MCF 10A (cell line): ENCODE measurements at regions of chr10 and their contacts with region 1.

Region 1: GRCh38 chr10:125982260-125982948 is 86.0 kb downstream of the FANK1 start:
- DNase-seq: peak; percentile 73
- H3K4me3 Mint-ChIP-seq: no peak overlapping the region
- H3K27ac Mint-ChIP-seq: no peak overlapping the region
- H3K4me1 Mint-ChIP-seq: no peaks in the 10 kb centered on the region
- H3K27me3 Mint-ChIP-seq: no peaks in the 10 kb centered on the region
- CTCF ChIP-seq: peak; percentile 53

Region 2: GRCh38 chr10:125231116-125231812 is 751.1 kb before region 1 on chr10:
- CTCF ChIA-PET with region 1: no interaction called
- POLR2A ChIA-PET with region 1: no interaction called
- intact Hi-C with region 1: no loop called
- DNase-seq: peak; percentile 90
- H3K4me3 Mint-ChIP-seq: peak overlapping the region; percentile 29
- H3K27ac Mint-ChIP-seq: peak overlapping the region; percentile 83
- H3K4me1 Mint-ChIP-seq: peaks cover 14% of the 10 kb centered on the region
- H3K27me3 Mint-ChIP-seq: no peaks in the 10 kb centered on the region
- CTCF ChIP-seq: no peak

Region 3: GRCh38 chr10:125822878-125823662 is 159.3 kb before region 1 on chr10 and contains the starts of genes BCCIP and UROS:
- CTCF ChIA-PET with region 1: no interaction called
- POLR2A ChIA-PET with region 1: no interaction called
- intact Hi-C with region 1: no loop called
- DNase-seq: peak; percentile 94
- H3K4me3 Mint-ChIP-seq: no peak within 1 kb of the TSS
- H3K27ac Mint-ChIP-seq: peak within 1 kb of the TSS; percentile 69
- H3K4me1 Mint-ChIP-seq: peaks cover 18% of the 10 kb centered on the region
- H3K27me3 Mint-ChIP-seq: no peaks in the 10 kb centered on the region
- CTCF ChIP-seq: no peak
- total RNA-seq, gene BCCIP: 70.8 and 88.2 TPM in 2 replicates
- total RNA-seq, gene UROS: 55.0 and 64.4 TPM in 2 replicates

Region 4: DNA sequence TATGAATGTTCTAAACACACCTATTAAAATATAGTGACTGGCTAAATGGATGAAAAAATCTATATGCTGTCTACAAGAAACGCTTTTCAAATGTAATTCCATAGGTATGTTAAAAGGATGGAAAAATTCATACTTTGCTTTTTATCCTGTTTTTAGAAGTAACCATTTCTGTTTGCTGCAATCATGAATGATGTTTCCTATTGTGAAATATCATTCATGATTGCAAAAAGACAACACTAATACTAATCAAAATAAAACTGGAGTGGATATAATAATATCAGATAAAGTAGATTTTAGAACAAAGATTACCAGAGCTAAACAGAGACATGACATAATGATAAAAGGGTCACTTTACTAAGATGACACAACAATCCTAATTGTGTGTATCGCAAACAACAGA is 52.2 kb after region 1 on chr10:
- CTCF ChIA-PET with region 1: no interaction called
- POLR2A ChIA-PET with region 1: no interaction called
- intact Hi-C with region 1: no loop called
- DNase-seq: no peak
- H3K4me3 Mint-ChIP-seq: no peak overlapping the region
- H3K27ac Mint-ChIP-seq: no peak overlapping the region
- H3K4me1 Mint-ChIP-seq: no peaks in the 10 kb centered on the region
- H3K27me3 Mint-ChIP-seq: no peaks in the 10 kb centered on the region
- CTCF ChIP-seq: no peak

Region 5: GRCh38 chr10:126097558-126098225 is 115.3 kb after region 1 on chr10:
- CTCF ChIA-PET with region 1: no interaction called
- POLR2A ChIA-PET with region 1: no interaction called
- intact Hi-C with region 1: loop called (anchors 2 kb)
- DNase-seq: peak; percentile 13
- H3K4me3 Mint-ChIP-seq: no peak overlapping the region
- H3K27ac Mint-ChIP-seq: no peak overlapping the region
- H3K4me1 Mint-ChIP-seq: no peaks in the 10 kb centered on the region
- H3K27me3 Mint-ChIP-seq: no peaks in the 10 kb centered on the region
- CTCF ChIP-seq: no peak

Region 6: GRCh38 chr10:126160971-126161659 is 178.7 kb after region 1 on chr10:
- CTCF ChIA-PET with region 1: interaction called, 7 read pairs
- POLR2A ChIA-PET with region 1: no interaction called
- intact Hi-C with region 1: loop called (anchors 1 kb)
- DNase-seq: peak; percentile 54
- H3K4me3 Mint-ChIP-seq: no peak overlapping the region
- H3K27ac Mint-ChIP-seq: no peak overlapping the region
- H3K4me1 Mint-ChIP-seq: no peaks in the 10 kb centered on the region
- H3K27me3 Mint-ChIP-seq: peaks cover 28% of the 10 kb centered on the region
- CTCF ChIP-seq: peak; percentile 48

Region 7: GRCh38 chr10:126302826-126303665 is 320.6 kb after region 1 on chr10:
- CTCF ChIA-PET with region 1: interaction called, 4 read pairs
- POLR2A ChIA-PET with region 1: no interaction called
- intact Hi-C with region 1: loop called (anchors 1 kb)
- DNase-seq: no peak
- H3K4me3 Mint-ChIP-seq: no peak overlapping the region
- H3K27ac Mint-ChIP-seq: no peak overlapping the region
- H3K4me1 Mint-ChIP-seq: no peaks in the 10 kb centered on the region
- H3K27me3 Mint-ChIP-seq: no peaks in the 10 kb centered on the region
- CTCF ChIP-seq: no peak

Region 8: GRCh38 chr10:126504063-126504739 is 521.8 kb after region 1 on chr10:
- CTCF ChIA-PET with region 1: interaction called, 40 read pairs
- POLR2A ChIA-PET with region 1: no interaction called
- intact Hi-C with region 1: loop called (anchors 1 kb)
- DNase-seq: peak; percentile 82
- H3K4me3 Mint-ChIP-seq: no peak overlapping the region
- H3K27ac Mint-ChIP-seq: no peak overlapping the region
- H3K4me1 Mint-ChIP-seq: no peaks in the 10 kb centered on the region
- H3K27me3 Mint-ChIP-seq: no peaks in the 10 kb centered on the region
- CTCF ChIP-seq: peak; percentile 75

Region 9: GRCh38 chr10:126598003-126598402 is 615.6 kb after region 1 on chr10:
- CTCF ChIA-PET with region 1: no interaction called
- POLR2A ChIA-PET with region 1: no interaction called
- intact Hi-C with region 1: loop called (anchors 10 kb)
- DNase-seq: peak; percentile 72
- H3K4me3 Mint-ChIP-seq: no peak overlapping the region
- H3K27ac Mint-ChIP-seq: no peak overlapping the region
- H3K4me1 Mint-ChIP-seq: no peaks in the 10 kb centered on the region
- H3K27me3 Mint-ChIP-seq: peaks cover 11% of the 10 kb centered on the region
- CTCF ChIP-seq: peak; percentile 27

Region 10: DNA sequence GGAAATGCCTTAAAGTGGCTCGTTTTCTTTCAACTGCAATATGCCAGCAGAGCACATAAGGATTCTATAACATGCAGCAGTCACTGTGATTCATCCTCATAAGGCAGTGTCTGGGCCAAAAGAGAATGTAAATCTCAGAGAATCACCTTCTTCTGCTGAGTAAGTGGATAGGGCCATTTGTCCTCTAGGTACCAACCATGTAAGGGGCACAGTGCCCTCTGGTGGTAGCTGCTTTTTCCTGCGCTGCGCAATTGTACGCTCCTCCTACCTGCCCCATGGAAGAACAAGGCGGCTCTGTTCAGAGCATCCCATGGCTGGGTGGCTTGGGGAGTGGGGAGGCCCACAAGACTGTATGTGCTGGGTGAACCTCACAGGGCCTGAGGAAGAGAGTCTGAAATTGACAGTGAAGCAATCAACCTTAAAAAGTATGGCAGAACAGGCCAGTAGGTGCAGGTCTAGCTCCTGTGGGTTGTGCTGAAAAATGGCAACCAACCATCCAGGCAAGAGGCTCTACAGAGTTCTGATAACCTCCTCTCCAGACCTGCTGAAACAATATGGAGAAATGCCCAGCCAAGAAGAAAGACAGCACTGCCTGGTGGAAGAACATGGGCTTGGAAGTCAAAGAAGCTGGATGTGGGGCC is 766.7 kb after region 1 on chr10:
- CTCF ChIA-PET with region 1: interaction called, 8 read pairs
- POLR2A ChIA-PET with region 1: no interaction called
- intact Hi-C with region 1: loop called (anchors 1 kb)
- DNase-seq: peak; percentile 80
- H3K4me3 Mint-ChIP-seq: no peak overlapping the region
- H3K27ac Mint-ChIP-seq: no peak overlapping the region
- H3K4me1 Mint-ChIP-seq: no peaks in the 10 kb centered on the region
- H3K27me3 Mint-ChIP-seq: peaks cover 40% of the 10 kb centered on the region
- CTCF ChIP-seq: peak; percentile 88